ENCODE measurements at regions of chr15 and their contacts with region 1.

Region 1: DNA sequence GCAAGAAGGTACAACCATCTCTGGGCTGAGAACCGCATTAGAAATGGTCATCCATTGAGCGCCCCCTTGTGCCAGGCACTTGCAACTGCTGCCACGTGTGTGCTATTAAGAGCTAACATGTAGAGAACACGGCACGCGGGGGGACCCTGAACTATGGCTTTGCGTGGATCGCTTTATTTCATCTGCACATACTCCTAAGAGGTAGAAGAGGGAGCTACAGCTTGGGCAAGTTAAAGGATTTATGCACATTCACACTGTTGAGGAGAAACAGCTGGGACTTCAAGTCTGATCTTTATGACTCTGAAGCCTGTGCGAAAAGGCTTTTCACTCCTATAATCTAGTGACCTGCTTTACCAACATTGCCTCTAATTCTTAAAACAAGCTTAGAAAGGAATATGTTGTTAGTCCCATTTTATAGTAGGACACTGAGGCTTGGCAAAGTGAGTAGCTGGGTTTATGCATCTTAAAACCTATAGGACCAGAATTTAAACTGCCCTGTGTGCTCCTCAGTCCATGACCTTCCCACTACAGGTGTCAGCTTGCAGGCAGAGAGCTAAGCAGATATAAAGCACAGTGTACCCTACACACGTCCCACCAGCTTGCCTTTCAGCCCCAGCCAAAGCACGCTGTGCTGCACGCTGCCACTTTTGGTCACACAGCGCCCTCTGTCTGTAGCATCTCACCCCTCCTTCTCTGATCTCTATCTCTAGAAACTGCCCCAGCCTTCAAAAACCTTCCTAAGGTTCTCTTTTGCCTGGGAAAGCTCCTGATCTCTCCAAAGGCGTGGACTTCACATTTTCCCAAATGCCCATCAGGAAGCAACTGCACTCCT is 57.8 kb downstream of the STARD5 start:
- DNase-seq: peak; percentile 86
- ATAC-seq: peak; percentile 91
- H3K4me3 ChIP-seq: no peak overlapping the region
- H3K27ac ChIP-seq: no peak overlapping the region
- H3K4me1 ChIP-seq: peaks cover 15% of the 10 kb centered on the region
- H3K27me3 ChIP-seq: no peaks in the 10 kb centered on the region
- CTCF ChIP-seq: peak; percentile 90

Region 2: GRCh38 chr15:80989518-80990478 is 276.4 kb before region 1 on chr15 and contains the start of gene MESD:
- intact Hi-C with region 1: loop called (anchors 10 kb)
- DNase-seq: peak; percentile 99
- ATAC-seq: peak; percentile 99
- H3K4me3 ChIP-seq: peak within 1 kb of the TSS; percentile 93
- H3K27ac ChIP-seq: peak within 1 kb of the TSS; percentile 95
- H3K4me1 ChIP-seq: peaks cover 47% of the 10 kb centered on the region
- H3K27me3 ChIP-seq: no peaks in the 10 kb centered on the region
- CTCF ChIP-seq: no peak
- total RNA-seq, gene MESD: 26.7 TPM

Region 3: GRCh38 chr15:81106560-81106959 is 159.6 kb before region 1 on chr15:
- intact Hi-C with region 1: loop called (anchors 5 kb)
- DNase-seq: no peak
- ATAC-seq: peak; percentile 88
- H3K4me3 ChIP-seq: no peak overlapping the region
- H3K27ac ChIP-seq: no peak overlapping the region
- H3K4me1 ChIP-seq: no peaks in the 10 kb centered on the region
- H3K27me3 ChIP-seq: no peaks in the 10 kb centered on the region
- CTCF ChIP-seq: peak; percentile 79

Region 4: DNA sequence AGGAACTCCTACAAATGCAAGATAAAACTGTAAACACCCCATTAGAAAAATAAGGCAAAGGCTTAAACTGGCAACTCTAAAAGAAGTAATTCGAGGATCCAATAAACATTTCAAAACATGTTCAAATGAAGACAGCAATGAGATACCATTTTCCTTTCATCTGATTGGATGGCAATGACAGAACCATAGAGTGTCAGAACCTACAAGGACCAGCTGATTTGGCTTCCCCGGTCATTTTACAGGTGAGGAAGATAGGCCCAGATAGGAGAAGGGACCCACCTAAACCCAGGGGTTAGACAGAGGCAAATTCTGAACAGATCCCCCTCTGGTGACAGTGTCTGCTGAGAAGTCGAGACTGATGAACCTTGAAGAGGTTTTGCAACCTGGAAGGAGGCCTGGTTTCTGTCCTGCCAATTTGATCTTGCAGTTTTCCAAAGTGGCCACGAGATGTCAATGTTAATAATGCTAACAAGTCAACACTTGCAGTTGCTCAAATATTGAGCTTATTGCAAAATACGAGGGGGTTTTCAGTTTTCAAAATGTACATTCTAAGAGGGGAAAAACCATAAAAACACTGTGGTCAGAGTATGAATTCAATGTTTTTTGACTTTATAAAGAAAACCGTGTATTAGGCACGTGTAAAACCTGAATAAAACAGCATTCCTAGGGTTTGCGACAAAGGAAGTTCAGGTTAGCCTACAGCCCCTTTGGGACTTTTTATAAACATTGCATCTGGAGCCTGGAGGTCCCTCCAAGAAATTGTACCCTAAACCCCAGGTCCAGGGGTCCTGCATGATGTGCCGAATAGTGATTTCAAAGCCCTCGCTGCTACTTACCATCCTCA is 110.6 kb before region 1 on chr15:
- intact Hi-C with region 1: loop called (anchors 10 kb)
- DNase-seq: no peak
- ATAC-seq: peak; percentile 63
- H3K4me3 ChIP-seq: no peak overlapping the region
- H3K27ac ChIP-seq: no peak overlapping the region
- H3K4me1 ChIP-seq: peaks cover 15% of the 10 kb centered on the region
- H3K27me3 ChIP-seq: no peaks in the 10 kb centered on the region
- CTCF ChIP-seq: peak; percentile 67

Measured in upper lobe of right lung (tissue), 1 donor.